CD8-positive, alpha-beta T cell (primary cell): ENCODE measurements at regions of chr17 and their contacts with region 1.

Region 1: DNA sequence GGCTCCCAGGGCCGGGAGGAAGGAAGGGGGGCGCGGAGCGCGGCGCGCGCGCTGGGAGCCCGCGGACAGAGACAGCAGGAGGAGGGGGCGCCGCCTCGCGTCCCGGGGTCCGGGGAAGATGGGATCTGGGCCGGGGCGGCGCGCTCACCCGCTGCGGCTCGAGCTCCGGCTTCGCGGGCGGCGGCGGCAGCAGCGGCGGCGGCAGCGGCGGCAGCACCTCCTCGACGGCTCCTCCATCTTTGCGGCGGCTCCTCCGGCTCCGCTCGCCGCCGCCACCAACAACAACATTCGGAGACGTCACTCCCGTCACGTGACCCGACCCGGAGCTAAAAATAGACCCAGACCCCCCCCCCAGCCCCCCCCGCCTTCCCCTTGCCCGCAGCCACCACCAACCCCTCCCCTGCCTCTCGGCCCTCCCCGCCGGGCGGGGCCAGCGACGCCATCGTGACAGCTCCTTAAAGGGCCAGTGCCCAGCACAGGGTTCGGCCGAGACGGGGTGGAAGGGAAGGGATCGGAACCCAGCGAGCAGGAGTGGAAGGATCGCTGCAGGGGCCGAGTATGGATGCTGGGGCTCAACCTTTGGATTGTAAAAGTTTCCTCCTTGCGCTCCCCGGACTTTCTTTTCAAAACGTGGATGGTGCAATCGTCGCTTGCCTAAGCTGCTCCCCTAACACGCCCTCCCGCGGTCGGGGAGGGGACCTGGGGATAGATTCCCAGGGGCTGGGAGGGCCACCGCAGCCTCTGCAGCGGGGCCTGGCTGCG is at the start of gene HDAC5:
- DNase-seq: peak; percentile 92 to 97 (median 95)
- ATAC-seq: peak; percentile 96
- H3K4me3 ChIP-seq: peak within 1 kb of the TSS; percentile 92 to 100
- H3K4me3 Mint-ChIP-seq: peak within 1 kb of the TSS; percentile 97
- H3K27ac ChIP-seq: peak within 1 kb of the TSS; percentile 66 to 82
- H3K27ac Mint-ChIP-seq: peak within 1 kb of the TSS; percentile 96
- H3K4me1 ChIP-seq: peaks cover 28% of the 10 kb centered on the region
- H3K4me1 Mint-ChIP-seq: peaks cover 45% of the 10 kb centered on the region
- H3K27me3 ChIP-seq: no peaks in the 10 kb centered on the region
- H3K27me3 Mint-ChIP-seq: no peaks in the 10 kb centered on the region
- CTCF ChIP-seq: peak; percentile 51
- total RNA-seq, gene HDAC5: 95.6 to 96.3 TPM

Region 2: DNA sequence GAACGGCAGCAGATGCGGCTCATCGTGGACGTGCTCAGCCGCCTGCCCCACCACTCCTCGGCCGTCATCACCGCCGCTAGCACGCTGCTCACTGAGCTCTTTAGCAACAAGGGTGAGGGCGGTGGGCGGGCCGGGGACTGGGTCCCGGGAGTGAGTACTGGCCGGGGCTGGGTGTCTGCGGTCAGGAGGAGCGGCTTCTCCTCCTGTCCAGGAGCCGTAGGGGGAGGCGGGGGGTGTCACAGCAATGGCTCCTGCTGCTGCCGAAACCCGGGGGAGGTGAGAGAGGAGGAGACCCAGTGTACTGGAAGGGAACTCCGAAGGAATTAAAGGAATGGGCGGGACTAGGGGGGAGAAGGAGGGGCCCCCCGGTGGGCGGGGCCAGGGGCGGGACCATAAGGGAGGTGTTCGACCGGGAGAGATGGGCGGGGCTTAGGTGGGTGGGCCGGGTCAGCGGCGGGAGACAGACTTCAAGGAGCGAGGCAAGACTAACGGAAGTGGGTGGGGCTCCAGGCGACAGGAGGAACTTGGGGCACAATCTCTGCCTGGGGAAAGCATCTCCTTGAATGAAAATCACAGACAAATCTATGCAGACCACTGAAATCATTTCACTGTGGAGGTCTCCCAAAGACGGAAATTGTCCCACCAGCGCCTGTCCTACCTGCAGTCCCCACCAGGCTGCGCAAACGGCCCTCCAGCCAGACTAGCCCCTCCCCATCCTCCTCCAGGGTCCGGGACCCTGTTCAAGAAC is 116.8 kb before region 1 on chr17:
- CTCF ChIA-PET with region 1: no interaction called
- POLR2A ChIA-PET with region 1: no interaction called
- intact Hi-C with region 1: loop called (anchors 2 to 5 kb)
- DNase-seq: peak; percentile 91 to 99 (median 97)
- ATAC-seq: peak; percentile 88
- H3K4me3 ChIP-seq: peak overlapping the region; percentile 50 to 60
- H3K4me3 Mint-ChIP-seq: peak overlapping the region; percentile 88
- H3K27ac ChIP-seq: peak overlapping the region in 1 of 2 experiments; percentile 22
- H3K27ac Mint-ChIP-seq: no peak overlapping the region
- H3K4me1 ChIP-seq: peaks cover 30% of the 10 kb centered on the region
- H3K4me1 Mint-ChIP-seq: peaks cover 21% of the 10 kb centered on the region
- H3K27me3 ChIP-seq: peaks cover 0 to 17% of the 10 kb centered on the region in 2 experiments
- H3K27me3 Mint-ChIP-seq: peaks cover 5% of the 10 kb centered on the region
- CTCF ChIP-seq: no peak

Region 3: GRCh38 chr17:44070455-44071197 is 52.9 kb before region 1 on chr17 and contains the start of gene G6PC3:
- CTCF ChIA-PET with region 1: interaction called, 4 read pairs
- POLR2A ChIA-PET with region 1: interaction called, 4 read pairs
- intact Hi-C with region 1: loop called (anchors 1 kb)
- DNase-seq: peak; percentile 30 to 88 (median 75)
- ATAC-seq: peak; percentile 55
- H3K4me3 ChIP-seq: peak within 1 kb of the TSS; percentile 70 to 84
- H3K4me3 Mint-ChIP-seq: peak within 1 kb of the TSS; percentile 96
- H3K27ac ChIP-seq: peak within 1 kb of the TSS; percentile 62 to 80
- H3K27ac Mint-ChIP-seq: peak within 1 kb of the TSS; percentile 94
- H3K4me1 ChIP-seq: peaks cover 23% of the 10 kb centered on the region
- H3K4me1 Mint-ChIP-seq: peaks cover 34% of the 10 kb centered on the region
- H3K27me3 ChIP-seq: no peaks in the 10 kb centered on the region
- H3K27me3 Mint-ChIP-seq: no peaks in the 10 kb centered on the region
- CTCF ChIP-seq: no peak
- total RNA-seq, gene G6PC3: 4.8 to 5.9 TPM

Region 4: DNA sequence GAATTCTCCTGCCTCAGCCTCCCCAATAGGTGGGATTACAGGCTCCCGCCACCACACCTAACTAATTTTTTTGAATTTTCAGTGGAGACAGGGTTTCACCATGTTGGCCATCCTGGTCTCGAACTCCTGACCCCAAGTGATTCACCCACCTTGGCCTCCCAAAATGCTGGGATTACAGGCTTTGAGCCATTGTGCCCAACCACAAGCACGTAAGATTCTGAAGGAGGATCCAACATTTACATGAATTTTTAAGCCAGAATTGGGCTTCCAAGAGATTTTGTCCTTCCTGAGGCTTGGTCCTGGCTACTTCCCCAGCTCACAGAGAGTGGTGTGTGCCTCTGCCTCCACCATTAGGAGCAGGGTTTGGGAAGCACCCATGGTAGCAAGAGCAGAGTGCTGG is 41.9 kb before region 1 on chr17:
- CTCF ChIA-PET with region 1: no interaction called
- POLR2A ChIA-PET with region 1: no interaction called
- intact Hi-C with region 1: no loop called
- DNase-seq: no peak
- ATAC-seq: no peak
- H3K4me3 ChIP-seq: no peak overlapping the region
- H3K4me3 Mint-ChIP-seq: no peak overlapping the region
- H3K27ac ChIP-seq: no peak overlapping the region
- H3K27ac Mint-ChIP-seq: no peak overlapping the region
- H3K4me1 ChIP-seq: no peaks in the 10 kb centered on the region
- H3K4me1 Mint-ChIP-seq: no peaks in the 10 kb centered on the region
- H3K27me3 ChIP-seq: no peaks in the 10 kb centered on the region
- H3K27me3 Mint-ChIP-seq: no peaks in the 10 kb centered on the region
- CTCF ChIP-seq: no peak

Region 5: GRCh38 chr17:44141717-44142285 is 18.3 kb after region 1 on chr17 and contains the start of gene HROB:
- CTCF ChIA-PET with region 1: interaction called, 10 read pairs
- POLR2A ChIA-PET with region 1: interaction called, 3 read pairs
- intact Hi-C with region 1: loop called (anchors 1 kb)
- DNase-seq: peak; percentile 95 to 99 (median 98)
- ATAC-seq: peak; percentile 91
- H3K4me3 ChIP-seq: peak within 1 kb of the TSS; percentile 62 to 80
- H3K4me3 Mint-ChIP-seq: peak within 1 kb of the TSS; percentile 84
- H3K27ac ChIP-seq: peak within 1 kb of the TSS; percentile 49 to 78
- H3K27ac Mint-ChIP-seq: peak within 1 kb of the TSS; percentile 49
- H3K4me1 ChIP-seq: peaks cover 11% of the 10 kb centered on the region
- H3K4me1 Mint-ChIP-seq: peaks cover 10% of the 10 kb centered on the region
- H3K27me3 ChIP-seq: peaks cover 0 to 14% of the 10 kb centered on the region in 2 experiments
- H3K27me3 Mint-ChIP-seq: peaks cover 10% of the 10 kb centered on the region
- CTCF ChIP-seq: peak; percentile 75
- total RNA-seq, gene HROB: 4.0 to 4.9 TPM

Region 6: DNA sequence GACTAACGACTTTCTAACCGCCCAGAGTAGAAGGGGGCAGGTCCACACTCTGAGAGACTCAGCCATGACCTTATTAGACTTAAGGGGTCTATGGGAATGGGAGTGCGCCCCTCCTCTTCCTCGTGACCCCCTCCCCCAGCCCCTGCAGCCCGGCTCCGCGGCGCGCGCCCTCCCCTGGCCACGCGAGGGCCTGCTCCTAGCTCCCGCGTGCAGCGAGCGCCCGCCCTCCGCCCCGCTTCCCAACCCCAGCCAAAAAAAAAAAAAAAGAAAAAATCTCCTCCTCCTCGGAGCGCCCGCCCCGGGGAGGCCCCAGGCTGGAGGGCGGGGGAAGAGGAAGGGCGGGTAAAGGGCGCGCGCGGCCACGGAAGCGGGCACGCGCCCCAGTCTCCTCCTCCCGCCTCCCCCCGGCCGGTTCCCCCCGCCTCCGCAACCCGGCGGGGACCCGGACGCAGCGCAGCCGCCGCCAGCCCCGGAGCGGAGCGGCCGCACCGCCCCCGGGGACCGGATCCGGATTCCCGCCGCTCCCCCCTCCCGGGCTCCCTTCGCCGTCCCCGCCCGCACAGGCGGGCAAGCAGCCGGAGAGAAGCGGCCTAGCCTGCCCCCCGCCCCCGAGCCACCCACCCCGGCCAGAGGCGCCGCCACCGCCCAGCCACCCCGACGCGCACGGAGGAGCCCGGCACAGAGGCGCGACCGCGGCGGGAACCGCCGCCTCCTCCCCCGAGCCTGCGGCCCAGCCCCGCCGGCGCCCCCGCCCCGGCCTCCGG is 95.0 kb after region 1 on chr17:
- CTCF ChIA-PET with region 1: interaction called, 3 read pairs
- POLR2A ChIA-PET with region 1: interaction called, 17 read pairs
- intact Hi-C with region 1: loop called (anchors 1 to 5 kb)
- DNase-seq: peak; percentile 71 to 96 (median 87)
- ATAC-seq: peak; percentile 55
- H3K4me3 ChIP-seq: peak overlapping the region; percentile 65 to 73
- H3K4me3 Mint-ChIP-seq: peak overlapping the region; percentile 74
- H3K27ac ChIP-seq: peak overlapping the region; percentile 46 to 78
- H3K27ac Mint-ChIP-seq: peak overlapping the region; percentile 96
- H3K4me1 ChIP-seq: peaks cover 56% of the 10 kb centered on the region
- H3K4me1 Mint-ChIP-seq: peaks cover 52% of the 10 kb centered on the region
- H3K27me3 ChIP-seq: no peaks in the 10 kb centered on the region
- H3K27me3 Mint-ChIP-seq: no peaks in the 10 kb centered on the region
- CTCF ChIP-seq: peak; percentile 53

Region 7: GRCh38 chr17:44324571-44325275 is 201.2 kb after region 1 on chr17 and contains the start of gene SLC25A39:
- CTCF ChIA-PET with region 1: no interaction called
- POLR2A ChIA-PET with region 1: interaction called, 10 read pairs
- intact Hi-C with region 1: loop called in 1 of 2 experiments (anchors 1 kb)
- DNase-seq: peak; percentile 90 to 98 (median 96)
- ATAC-seq: peak; percentile 72
- H3K4me3 ChIP-seq: peak within 1 kb of the TSS; percentile 84 to 91
- H3K4me3 Mint-ChIP-seq: peak within 1 kb of the TSS; percentile 88
- H3K27ac ChIP-seq: peak within 1 kb of the TSS; percentile 88 to 93
- H3K27ac Mint-ChIP-seq: peak within 1 kb of the TSS; percentile 96
- H3K4me1 ChIP-seq: peaks cover 14% of the 10 kb centered on the region
- H3K4me1 Mint-ChIP-seq: peaks cover 30% of the 10 kb centered on the region
- H3K27me3 ChIP-seq: no peaks in the 10 kb centered on the region
- H3K27me3 Mint-ChIP-seq: no peaks in the 10 kb centered on the region
- CTCF ChIP-seq: no peak
- total RNA-seq, gene SLC25A39: 73.1 to 77.7 TPM